ENCODE measurements at regions of chr4 and their contacts with region 1.

Region 1: GRCh38 chr4:180058731-180059215 is 2184.4 kb upstream of the TENM3 start:
- DNase-seq: peak in 1 of 2 experiments; percentile 19
- H3K4me3 ChIP-seq: peak overlapping the region; percentile 43
- H3K4me3 Mint-ChIP-seq: peak overlapping the region; percentile 78
- H3K27ac Mint-ChIP-seq: no peak overlapping the region
- H3K4me1 ChIP-seq: peaks cover 14% of the 10 kb centered on the region
- H3K4me1 Mint-ChIP-seq: no peaks in the 10 kb centered on the region
- H3K27me3 ChIP-seq: no peaks in the 10 kb centered on the region; the same call in 1 of the 2 replicates
- H3K27me3 Mint-ChIP-seq: peaks cover 28% of the 10 kb centered on the region
- CTCF ChIP-seq: no peak

Region 2: DNA sequence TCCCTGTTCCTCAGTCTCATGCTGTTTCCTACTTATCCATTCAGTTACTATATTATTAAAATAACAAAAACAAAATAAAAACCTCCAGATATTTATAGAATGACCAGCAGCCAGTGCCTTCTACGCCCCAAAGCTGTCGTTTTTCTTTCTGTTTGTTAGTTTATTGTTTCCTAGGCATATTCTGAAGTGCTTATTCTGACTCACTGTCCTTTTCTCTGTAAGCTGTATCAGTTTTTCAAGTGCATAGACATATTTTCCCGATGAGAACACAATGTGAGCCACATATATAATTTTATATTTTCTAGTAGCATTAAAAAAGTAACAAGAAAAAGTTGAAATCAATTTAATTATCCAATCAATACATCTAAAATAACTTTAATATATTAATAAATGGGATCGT is 25.8 kb after region 1 on chr4:
- CTCF ChIA-PET with region 1: no interaction called
- POLR2A ChIA-PET with region 1: no interaction called
- intact Hi-C with region 1: loop called (anchors 2 kb)
- DNase-seq: no peak
- H3K4me3 ChIP-seq: no peak overlapping the region
- H3K4me3 Mint-ChIP-seq: no peak overlapping the region
- H3K27ac Mint-ChIP-seq: no peak overlapping the region
- H3K4me1 ChIP-seq: peaks cover 22% of the 10 kb centered on the region
- H3K4me1 Mint-ChIP-seq: peaks cover 5% of the 10 kb centered on the region
- H3K27me3 ChIP-seq: no peaks in the 10 kb centered on the region
- H3K27me3 Mint-ChIP-seq: no peaks in the 10 kb centered on the region
- CTCF ChIP-seq: no peak

Region 3: GRCh38 chr4:180106122-180106521 is 47.3 kb after region 1 on chr4:
- CTCF ChIA-PET with region 1: no interaction called
- POLR2A ChIA-PET with region 1: no interaction called
- intact Hi-C with region 1: loop called (anchors 5 kb)
- DNase-seq: no peak
- H3K4me3 ChIP-seq: no peak overlapping the region
- H3K4me3 Mint-ChIP-seq: no peak overlapping the region
- H3K27ac Mint-ChIP-seq: no peak overlapping the region
- H3K4me1 ChIP-seq: no peaks in the 10 kb centered on the region
- H3K4me1 Mint-ChIP-seq: no peaks in the 10 kb centered on the region
- H3K27me3 ChIP-seq: no peaks in the 10 kb centered on the region
- H3K27me3 Mint-ChIP-seq: peaks cover 8% of the 10 kb centered on the region
- CTCF ChIP-seq: no peak

Region 4: DNA sequence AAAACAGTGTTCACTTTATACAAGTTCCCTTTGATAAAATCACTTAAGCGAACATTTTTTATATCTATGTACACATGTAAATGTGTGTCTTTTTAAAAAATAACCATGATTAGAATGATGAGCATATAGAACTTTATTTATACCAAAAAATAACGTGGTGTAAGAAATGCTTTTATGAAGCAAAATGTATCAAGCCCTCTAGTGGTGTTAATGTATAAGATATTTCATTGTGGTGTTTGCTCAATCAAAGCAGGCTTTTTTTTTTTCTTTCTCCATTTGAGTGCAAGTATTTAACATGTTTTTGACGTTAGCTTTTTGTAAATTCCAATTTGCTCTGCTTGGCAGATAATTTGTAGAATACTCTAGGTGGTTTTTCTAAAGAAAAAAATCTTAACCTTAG is 92.0 kb after region 1 on chr4:
- CTCF ChIA-PET with region 1: no interaction called
- POLR2A ChIA-PET with region 1: no interaction called
- intact Hi-C with region 1: loop called (anchors 1 kb)
- DNase-seq: no peak
- H3K4me3 ChIP-seq: no peak overlapping the region
- H3K4me3 Mint-ChIP-seq: no peak overlapping the region
- H3K27ac Mint-ChIP-seq: no peak overlapping the region
- H3K4me1 ChIP-seq: no peaks in the 10 kb centered on the region
- H3K4me1 Mint-ChIP-seq: no peaks in the 10 kb centered on the region
- H3K27me3 ChIP-seq: no peaks in the 10 kb centered on the region
- H3K27me3 Mint-ChIP-seq: peaks cover 3% of the 10 kb centered on the region
- CTCF ChIP-seq: peak; percentile 40 to 56